Activated CD4-positive, alpha-beta T cell treated with anti-CD3 and anti-CD28 coated beads for 36 hours (primary cell): ENCODE measurements at regions of chr1 and their contacts with region 1.

Region 1: GRCh38 chr1:226662642-226663326 is 76.3 kb downstream of the ITPKB start:
- DNase-seq: peak; percentile 91
- ATAC-seq: peak; percentile 93
- H3K4me3 Mint-ChIP-seq: peak overlapping the region; percentile 53
- H3K27ac Mint-ChIP-seq: peak overlapping the region; percentile 94
- H3K4me1 Mint-ChIP-seq: no peaks in the 10 kb centered on the region
- H3K27me3 Mint-ChIP-seq: no peaks in the 10 kb centered on the region

Region 2: GRCh38 chr1:226634166-226634588 is 28.6 kb before region 1 on chr1:
- CTCF ChIA-PET with region 1: interaction called, 13 read pairs
- POLR2A ChIA-PET with region 1: interaction called, 3 read pairs
- intact Hi-C with region 1: loop called (anchors 1 to 2 kb)
- DNase-seq: peak; percentile 91
- ATAC-seq: peak; percentile 70
- H3K4me3 Mint-ChIP-seq: no peak overlapping the region
- H3K27ac Mint-ChIP-seq: peak overlapping the region; percentile 17
- H3K4me1 Mint-ChIP-seq: peaks cover 49% of the 10 kb centered on the region
- H3K27me3 Mint-ChIP-seq: no peaks in the 10 kb centered on the region

Region 3: DNA sequence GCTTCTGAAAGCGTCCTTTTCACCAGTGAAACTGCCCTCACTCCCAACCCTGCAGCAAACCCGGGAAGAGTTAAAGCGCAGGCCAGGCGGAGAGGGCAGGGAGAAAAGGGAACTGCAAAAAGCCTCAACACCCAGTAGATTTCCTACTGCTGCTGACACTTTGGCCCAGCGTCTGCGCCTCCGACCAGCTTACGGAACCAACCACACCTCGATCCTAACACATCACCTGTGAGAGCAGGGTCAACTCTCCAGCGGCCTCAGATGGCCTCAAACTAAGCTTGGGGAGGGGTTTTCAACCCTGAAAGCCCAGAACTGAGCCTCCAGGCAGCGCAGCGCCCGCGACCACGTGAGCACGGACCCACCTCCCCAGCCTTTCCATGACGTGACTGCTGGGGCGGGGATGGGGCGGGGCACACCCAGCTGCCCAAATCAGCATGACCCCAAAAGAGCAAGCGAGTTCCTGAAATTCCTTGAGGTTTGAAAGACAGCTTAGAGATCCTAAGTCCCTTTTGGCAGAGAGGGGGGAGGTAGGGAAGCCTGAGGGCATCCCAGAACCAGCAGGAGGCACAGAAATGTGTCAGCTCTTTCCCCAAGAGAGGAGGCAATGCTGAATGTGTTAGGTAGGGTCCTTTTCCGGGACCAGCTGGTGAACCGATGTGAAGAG is 17.2 kb after region 1 on chr1:
- CTCF ChIA-PET with region 1: interaction called, 43 read pairs
- POLR2A ChIA-PET with region 1: interaction called, 3 read pairs
- intact Hi-C with region 1: loop called (anchors 1 kb)
- DNase-seq: peak; percentile 89
- ATAC-seq: peak; percentile 20
- H3K4me3 Mint-ChIP-seq: peak overlapping the region; percentile 67
- H3K27ac Mint-ChIP-seq: peak overlapping the region; percentile 95
- H3K4me1 Mint-ChIP-seq: peaks cover 99% of the 10 kb centered on the region
- H3K27me3 Mint-ChIP-seq: no peaks in the 10 kb centered on the region

Region 4: GRCh38 chr1:226697151-226697939 is 34.6 kb after region 1 on chr1:
- CTCF ChIA-PET with region 1: interaction called, 7 read pairs
- POLR2A ChIA-PET with region 1: interaction called, 4 read pairs
- intact Hi-C with region 1: loop called in 1 of 2 experiments (anchors 2 kb)
- DNase-seq: no peak
- ATAC-seq: peak; percentile 77
- H3K4me3 Mint-ChIP-seq: no peak overlapping the region
- H3K27ac Mint-ChIP-seq: peak overlapping the region; percentile 97
- H3K4me1 Mint-ChIP-seq: peaks cover 90% of the 10 kb centered on the region
- H3K27me3 Mint-ChIP-seq: no peaks in the 10 kb centered on the region

Region 5: GRCh38 chr1:226882631-226883409 is 220.0 kb after region 1 on chr1:
- CTCF ChIA-PET with region 1: no interaction called
- POLR2A ChIA-PET with region 1: no interaction called
- intact Hi-C with region 1: loop called in 1 of 2 experiments (anchors 1 kb)
- DNase-seq: peak; percentile 54
- ATAC-seq: peak; percentile 92
- H3K4me3 Mint-ChIP-seq: peak overlapping the region; percentile 64
- H3K27ac Mint-ChIP-seq: peak overlapping the region; percentile 91
- H3K4me1 Mint-ChIP-seq: peaks cover 53% of the 10 kb centered on the region
- H3K27me3 Mint-ChIP-seq: no peaks in the 10 kb centered on the region